ENCODE measurements at regions of chr17 and their contacts with region 1.

Region 1: DNA sequence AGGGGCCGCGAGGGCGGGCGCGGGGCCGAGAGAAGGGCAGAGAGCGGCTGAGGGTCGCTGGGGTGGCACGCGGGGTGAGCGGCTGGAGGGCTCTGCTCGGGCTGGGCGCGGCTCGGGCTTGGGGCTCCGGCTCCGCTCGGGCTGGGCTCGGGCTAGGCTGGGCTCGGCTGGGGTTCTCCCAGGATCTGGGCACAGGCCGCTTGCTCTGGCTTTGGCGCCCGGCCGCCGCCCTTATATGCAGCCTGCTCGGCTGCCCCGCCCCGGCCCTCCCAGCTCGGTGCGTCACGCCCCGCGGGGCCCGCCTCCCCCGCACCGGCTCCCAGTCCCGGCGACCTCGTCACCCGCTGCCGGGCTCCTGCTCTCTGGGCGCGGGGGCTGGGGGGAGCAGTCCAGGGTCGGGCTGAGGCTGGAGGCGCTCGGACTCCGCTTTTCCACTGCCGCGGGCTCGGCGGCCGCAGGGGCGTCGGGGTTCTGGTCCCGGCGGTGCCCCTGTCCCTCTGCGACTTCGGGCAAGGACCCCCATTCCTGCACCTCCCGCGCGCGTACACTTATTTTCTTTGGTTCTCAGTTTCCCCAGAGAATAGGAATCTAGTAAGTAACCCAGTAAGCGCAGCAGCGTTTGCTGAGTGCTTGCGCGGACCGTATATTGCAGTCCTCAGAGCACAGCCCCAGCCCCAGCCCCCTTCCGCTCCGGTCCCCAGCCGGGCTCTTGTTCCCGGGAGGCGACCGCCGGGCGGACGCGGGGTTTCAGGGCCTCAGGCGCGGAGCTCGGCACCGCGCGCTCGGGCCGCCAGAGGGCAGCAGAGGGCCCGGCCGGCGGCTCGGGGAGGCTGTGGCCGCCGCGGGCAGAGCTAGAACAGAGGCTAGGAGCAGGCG is at the start of gene RASD1:
- DNase-seq: peak; percentile 93
- H3K4me3 ChIP-seq: peak within 1 kb of the TSS; percentile 73 to 79
- H3K27ac ChIP-seq: peak within 1 kb of the TSS; percentile 80 to 84
- H3K4me1 ChIP-seq: peaks cover 13% of the 10 kb centered on the region
- H3K27me3 ChIP-seq: no peaks in the 10 kb centered on the region
- CTCF ChIP-seq: peak; percentile 96 to 98 (median 98)
- POLR2A ChIP-seq: peak; percentile 95
- total RNA-seq, gene RASD1: 99.7 to 129 TPM

Region 2: DNA sequence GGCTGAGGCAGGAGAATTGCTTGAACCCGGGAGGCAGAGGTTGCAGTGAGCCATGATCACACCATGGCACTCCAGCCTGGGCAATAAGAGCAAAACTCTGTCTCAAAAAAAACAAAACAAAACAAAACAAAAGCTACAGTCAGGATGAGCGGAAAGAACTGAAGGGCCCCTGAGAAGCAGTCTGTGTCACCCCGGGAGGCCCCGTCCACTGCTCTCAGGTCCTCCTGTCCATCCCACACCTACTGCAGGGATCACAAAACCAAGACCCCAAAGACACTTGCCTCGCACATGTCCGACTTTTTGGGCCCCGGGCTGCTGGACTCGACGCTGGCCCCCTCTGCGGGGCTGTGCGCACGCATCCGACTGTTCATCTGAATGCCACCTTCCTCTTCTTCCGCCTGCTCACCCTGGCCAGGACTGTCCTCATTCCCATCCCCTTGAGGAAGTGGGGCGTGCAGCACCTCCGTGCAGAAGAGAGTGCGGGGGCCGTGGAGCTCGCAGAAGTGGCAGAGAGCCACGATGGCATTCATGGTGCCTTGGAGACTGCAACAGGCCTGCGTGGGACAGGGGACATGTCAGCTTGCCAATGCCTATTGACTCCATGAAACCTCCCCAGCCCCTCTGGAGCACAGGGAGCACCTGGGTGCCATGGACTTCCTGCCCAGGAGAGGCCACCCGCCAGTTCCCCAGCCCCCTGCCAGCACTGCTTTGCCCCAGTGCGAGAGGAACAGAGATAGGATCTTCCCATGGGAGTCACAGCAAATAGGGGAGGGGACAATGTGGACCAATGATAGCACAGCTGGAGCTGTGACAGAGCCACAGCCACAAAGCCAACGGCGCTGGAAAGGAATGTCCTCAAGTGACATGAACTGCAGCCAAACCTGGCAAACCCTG is 268.6 kb before region 1 on chr17:
- intact Hi-C with region 1: no loop called
- DNase-seq: peak; percentile 61
- H3K4me3 ChIP-seq: no peak overlapping the region
- H3K27ac ChIP-seq: no peak overlapping the region
- H3K4me1 ChIP-seq: peaks cover 14% of the 10 kb centered on the region
- H3K27me3 ChIP-seq: no peaks in the 10 kb centered on the region
- CTCF ChIP-seq: no peak
- POLR2A ChIP-seq: no peak

Region 3: GRCh38 chr17:17568749-17569195 is 72.3 kb after region 1 on chr17:
- intact Hi-C with region 1: loop called (anchors 10 kb)
- DNase-seq: peak; percentile 86
- H3K4me3 ChIP-seq: no peak overlapping the region
- H3K27ac ChIP-seq: peak overlapping the region; percentile 63 to 86
- H3K4me1 ChIP-seq: peaks cover 90% of the 10 kb centered on the region
- H3K27me3 ChIP-seq: no peaks in the 10 kb centered on the region
- CTCF ChIP-seq: peak; percentile 60 to 69 (median 65)
- POLR2A ChIP-seq: no peak

Region 4: DNA sequence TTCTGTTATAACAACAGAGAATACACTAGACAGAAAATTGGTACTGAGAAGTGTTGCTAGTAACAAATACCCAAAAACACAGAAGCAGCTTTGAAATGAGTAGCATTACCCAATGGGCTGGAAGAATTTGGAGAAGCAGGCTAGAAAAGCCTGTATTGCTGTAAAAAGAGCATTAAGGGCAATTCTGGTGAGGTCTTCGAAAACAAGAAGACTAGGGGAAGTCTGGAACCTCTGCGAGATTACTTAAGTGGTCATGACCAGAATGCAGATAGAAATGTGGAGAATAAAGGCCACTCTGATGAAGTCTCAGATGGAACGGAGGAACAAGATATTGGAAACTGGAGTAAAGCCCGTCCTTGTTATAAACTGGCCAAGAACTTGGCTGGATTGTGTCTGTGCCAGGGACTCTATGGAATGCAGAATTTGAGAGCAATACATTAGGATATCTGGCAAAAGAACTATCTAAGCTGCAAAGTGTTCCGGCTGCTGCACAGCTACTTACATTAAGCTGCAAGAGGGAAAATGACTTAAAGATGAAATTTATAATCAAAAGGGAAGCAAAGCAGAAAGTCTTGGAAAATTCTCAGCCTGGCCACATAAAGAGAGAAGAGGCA is 140.0 kb after region 1 on chr17:
- intact Hi-C with region 1: loop called (anchors 5 kb)
- DNase-seq: no peak
- H3K4me3 ChIP-seq: no peak overlapping the region
- H3K27ac ChIP-seq: peak overlapping the region; percentile 39 to 67
- H3K4me1 ChIP-seq: peaks cover 20% of the 10 kb centered on the region
- H3K27me3 ChIP-seq: no peaks in the 10 kb centered on the region
- CTCF ChIP-seq: no peak
- POLR2A ChIP-seq: no peak